Heart left ventricle (tissue), 16 donors: ENCODE measurements at regions of chr5 and their contacts with region 1.

Region 1: DNA sequence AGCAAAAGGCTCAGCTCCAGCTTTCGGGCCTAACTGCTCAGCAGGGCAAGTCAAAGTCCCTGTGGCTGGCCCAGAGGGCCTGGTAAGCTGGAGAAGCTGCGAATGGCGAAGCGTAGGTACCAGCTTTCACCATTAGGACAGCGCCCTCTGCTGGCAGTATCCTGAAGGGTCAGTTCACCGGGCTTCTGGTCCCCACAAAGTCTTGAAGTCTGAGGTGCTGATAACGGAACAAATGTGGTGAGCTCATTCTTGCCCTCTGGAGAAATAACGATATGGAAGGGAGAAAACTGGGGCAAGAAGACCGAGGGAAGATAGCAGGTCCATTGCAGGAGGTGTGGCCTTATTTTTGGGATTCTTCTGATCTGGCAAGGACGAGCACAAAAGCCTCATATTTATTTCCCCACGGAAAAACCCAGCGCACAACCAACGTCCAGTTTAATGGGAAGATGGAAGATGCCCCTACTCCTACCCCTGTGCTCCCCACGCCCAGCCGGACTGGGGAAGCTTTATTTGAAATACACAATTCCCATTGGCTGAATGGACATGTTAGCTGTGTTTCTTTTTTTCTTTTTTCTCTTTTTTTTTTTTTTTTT is 7.2 kb downstream of the SOWAHA start:
- DNase-seq: peak; percentile 86 to 93 (median 90)
- ATAC-seq: peak; percentile 75 to 88 (median 84)
- H3K4me3 ChIP-seq: peak overlapping the region in 1 of 12 donors; percentile 14
- H3K27ac ChIP-seq: no peak overlapping the region
- H3K4me1 ChIP-seq: peaks cover 0 to 16% (median 5%) of the 10 kb centered on the region in 12 donors
- H3K27me3 ChIP-seq: peaks cover 0 to 33% (median 0%) of the 10 kb centered on the region in 9 donors
- CTCF ChIP-seq: peak; percentile 84 to 94 (median 92)
- POLR2A ChIP-seq: no peak

Region 2: DNA sequence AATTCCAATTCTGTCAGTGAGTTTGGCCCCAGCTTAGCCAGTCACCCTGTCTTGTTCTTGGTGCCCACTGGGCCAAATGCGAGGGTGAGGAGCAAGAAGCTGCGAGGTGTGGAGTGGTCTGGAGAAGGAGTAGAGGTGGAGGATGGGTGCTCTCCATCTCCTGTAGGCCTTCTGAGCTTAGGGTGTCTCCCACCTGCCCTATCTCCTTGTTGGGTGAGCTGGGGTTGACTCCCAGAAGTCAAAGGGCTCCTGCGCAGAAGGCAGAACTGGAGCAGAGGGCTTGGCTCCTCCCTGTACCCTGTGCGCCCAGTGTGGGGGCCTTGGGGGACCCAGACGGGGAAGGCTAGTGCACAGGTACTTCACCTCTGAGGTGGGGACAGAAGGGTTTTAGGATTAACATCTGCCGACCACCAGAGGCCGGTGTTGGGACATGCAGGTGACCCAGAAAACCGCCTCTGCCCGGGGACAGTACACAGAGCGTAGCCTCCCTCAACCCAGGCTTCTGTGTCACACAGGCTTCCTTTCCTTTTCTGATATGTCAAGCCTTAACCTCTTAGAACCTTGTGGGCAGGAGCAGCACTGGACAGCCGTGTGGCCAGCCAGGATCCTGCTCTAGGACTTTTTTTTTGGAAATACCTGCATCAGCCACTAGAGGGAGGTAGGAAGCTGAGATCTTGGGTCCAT is 293.8 kb before region 1 on chr5:
- intact Hi-C with region 1: loop called in 9 of 10 experiments (anchors 1 to 10 kb)
- DNase-seq: peak in 2 of 5 donors; percentile 17 to 23
- ATAC-seq: peak; percentile 20 to 83 (median 79)
- H3K4me3 ChIP-seq: no peak overlapping the region
- H3K27ac ChIP-seq: no peak overlapping the region
- H3K4me1 ChIP-seq: peaks cover 0 to 6% (median 0%) of the 10 kb centered on the region in 12 donors
- H3K27me3 ChIP-seq: no peaks in the 10 kb centered on the region
- CTCF ChIP-seq: peak; percentile 74 to 84 (median 80)
- POLR2A ChIP-seq: no peak

Region 3: DNA sequence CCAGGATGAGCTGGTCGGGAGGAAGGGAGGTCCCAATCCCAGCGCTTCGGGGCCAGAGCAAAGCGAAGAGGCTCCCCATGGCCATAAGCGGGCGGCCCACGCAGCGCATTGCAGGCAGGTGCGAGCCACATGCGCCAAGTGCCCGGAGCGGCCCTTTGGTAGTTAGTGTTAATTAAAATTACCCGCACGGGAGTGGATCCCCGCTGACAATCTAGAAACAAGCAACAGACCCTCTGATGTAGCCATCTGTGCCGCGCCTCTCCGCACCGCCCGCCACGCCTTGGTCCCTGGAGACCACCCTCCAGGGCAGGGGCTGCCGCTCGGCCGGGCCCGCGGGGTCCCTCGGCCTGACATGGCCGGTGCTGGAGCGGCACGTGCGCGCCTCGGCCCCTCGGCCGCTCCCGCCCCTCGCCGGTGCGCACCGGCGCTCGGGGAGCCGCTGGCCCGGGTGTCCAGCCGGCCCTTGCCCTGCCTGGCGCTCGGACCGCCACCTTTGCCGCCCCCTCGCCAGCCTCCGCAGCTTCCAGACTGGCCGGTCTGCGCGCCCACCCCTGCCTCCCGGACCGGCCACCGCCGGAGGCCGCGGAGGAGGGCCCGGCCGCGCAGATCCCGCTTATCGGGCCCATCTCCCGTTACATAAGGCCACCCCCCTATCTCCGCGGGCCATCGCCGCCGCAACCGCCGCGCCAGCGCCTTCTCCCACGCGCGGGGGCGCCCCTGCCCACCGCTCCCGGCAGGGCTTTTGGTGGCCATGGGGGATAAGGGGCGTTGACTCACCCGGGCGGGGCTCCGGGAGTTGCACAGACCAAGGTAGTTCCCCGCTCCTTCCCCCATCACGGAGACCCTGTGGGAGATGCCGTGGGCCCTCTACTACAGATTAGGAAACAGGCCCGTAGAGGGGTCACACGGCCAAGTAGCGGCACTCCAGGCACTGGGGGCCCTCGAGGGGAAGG is 164.2 kb before region 1 on chr5:
- intact Hi-C with region 1: no loop called
- DNase-seq: no peak
- ATAC-seq: peak in 2 of 4 donors; percentile 13 to 40
- H3K4me3 ChIP-seq: peak overlapping the region in 11 of 12 donors; percentile 14 to 53 (median 46)
- H3K27ac ChIP-seq: no peak overlapping the region
- H3K4me1 ChIP-seq: peaks cover 0 to 13% (median 7%) of the 10 kb centered on the region in 12 donors
- H3K27me3 ChIP-seq: peaks cover 12 to 35% (median 21%) of the 10 kb centered on the region in 9 donors
- CTCF ChIP-seq: no peak
- POLR2A ChIP-seq: no peak

Region 4: GRCh38 chr5:132753135-132753987 is 66.9 kb before region 1 on chr5:
- intact Hi-C with region 1: loop called in 7 of 10 experiments (anchors 2 to 10 kb)
- DNase-seq: no peak
- ATAC-seq: peak in 2 of 4 donors; percentile 24 to 45
- H3K4me3 ChIP-seq: no peak overlapping the region
- H3K27ac ChIP-seq: no peak overlapping the region
- H3K4me1 ChIP-seq: peaks cover 0 to 2% (median 0%) of the 10 kb centered on the region in 12 donors
- H3K27me3 ChIP-seq: peaks cover 0 to 2% (median 0%) of the 10 kb centered on the region in 9 donors
- CTCF ChIP-seq: peak in 2 of 12 donors; percentile 12
- POLR2A ChIP-seq: no peak

Region 5: DNA sequence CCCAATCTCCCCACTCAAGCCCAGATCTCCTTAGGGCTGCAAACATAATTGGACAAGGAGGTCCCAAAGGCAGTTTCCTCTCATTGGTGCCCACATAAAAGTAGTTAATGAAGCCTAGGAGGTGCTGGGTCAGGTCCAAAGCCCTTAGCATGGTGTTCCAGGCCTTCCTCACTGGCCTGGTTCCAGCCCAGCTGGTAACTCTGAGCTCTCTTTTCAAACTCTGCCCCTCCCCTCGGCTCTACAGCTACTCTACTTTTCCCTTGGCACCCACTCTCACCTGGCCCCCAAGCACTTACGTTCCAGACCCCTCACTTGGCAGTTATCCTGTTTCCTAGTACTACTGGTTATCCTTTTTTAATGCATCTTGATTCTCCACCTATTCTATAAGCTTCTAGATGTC is 53.1 kb before region 1 on chr5:
- intact Hi-C with region 1: loop called in 1 of 10 experiments (anchors 5 kb)
- DNase-seq: peak in 1 of 5 donors; percentile 69
- ATAC-seq: peak in 1 of 4 donors; percentile 30
- H3K4me3 ChIP-seq: no peak overlapping the region
- H3K27ac ChIP-seq: peak overlapping the region in 3 of 12 donors; percentile 25 to 55 (median 39)
- H3K4me1 ChIP-seq: peaks cover 2 to 68% (median 53%) of the 10 kb centered on the region in 12 donors
- H3K27me3 ChIP-seq: no peaks in the 10 kb centered on the region
- CTCF ChIP-seq: no peak
- POLR2A ChIP-seq: no peak

Region 6: DNA sequence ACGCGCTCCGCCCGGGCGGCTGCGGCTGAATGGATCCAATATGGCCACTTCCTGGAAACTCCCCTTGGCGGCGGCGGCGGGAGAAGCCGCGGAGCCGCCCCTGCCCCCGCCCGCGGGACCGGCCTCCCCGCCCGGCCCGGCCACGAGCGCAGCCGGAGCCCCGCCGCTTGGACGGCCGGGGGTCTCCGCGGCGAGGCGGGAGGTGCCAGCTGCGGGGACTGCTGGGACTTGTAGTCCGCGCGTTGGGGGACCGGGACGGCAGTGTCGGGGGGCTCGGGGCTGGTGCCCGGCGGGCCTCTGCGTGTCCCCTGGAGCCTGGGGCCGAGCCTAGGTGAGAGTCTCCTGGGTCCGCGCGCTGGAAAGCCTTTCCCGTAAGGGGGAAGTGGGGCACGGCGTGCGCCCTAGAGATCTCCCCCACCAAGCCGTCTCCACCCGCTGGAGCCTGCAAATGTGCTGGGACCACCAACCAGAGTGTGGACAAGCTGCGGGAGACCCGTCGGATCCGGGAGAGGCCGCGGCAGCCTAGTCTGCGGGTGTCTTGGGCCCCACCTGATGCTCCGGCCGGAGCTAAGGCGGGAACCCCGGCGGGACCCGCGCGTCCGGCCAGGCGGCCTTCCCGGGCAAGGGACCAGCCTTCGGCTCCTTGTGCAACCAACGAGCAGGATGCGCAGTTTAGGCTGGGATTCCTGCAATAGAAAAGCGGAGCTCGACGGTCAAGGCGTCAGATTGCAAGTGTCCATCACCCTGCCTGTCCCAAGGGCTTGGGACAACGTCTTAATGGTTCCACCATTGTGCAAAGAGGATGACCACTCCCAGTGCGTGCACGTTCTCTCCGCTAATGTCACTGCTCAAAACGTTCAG is 42.8 kb before region 1 on chr5 and contains the start of gene SEPTIN8:
- intact Hi-C with region 1: loop called in 2 of 10 experiments (anchors 5 kb)
- DNase-seq: peak; percentile 56 to 75 (median 70)
- ATAC-seq: peak in 3 of 4 donors; percentile 58 to 66 (median 59)
- H3K4me3 ChIP-seq: peak within 1 kb of the TSS; percentile 65 to 98 (median 90)
- H3K27ac ChIP-seq: peak within 1 kb of the TSS; percentile 72 to 92 (median 86)
- H3K4me1 ChIP-seq: peaks cover 0 to 52% (median 33%) of the 10 kb centered on the region in 12 donors
- H3K27me3 ChIP-seq: peaks cover 0 to 4% (median 0%) of the 10 kb centered on the region in 9 donors
- CTCF ChIP-seq: peak in 1 of 12 donors; percentile 11
- POLR2A ChIP-seq: peak in 1 of 2 donors; percentile 15
- total RNA-seq, gene SEPTIN8: 24.5 to 47.6 (median 33.8) TPM